ENCODE measurements at regions of chr15 and their contacts with region 1.

Region 1: GRCh38 chr15:33737687-33738601 is 230.4 kb upstream of the CHRM5 start:
- DNase-seq: peak; percentile 55
- H3K4me3 ChIP-seq: no peak overlapping the region
- H3K27ac ChIP-seq: no peak overlapping the region
- H3K4me1 ChIP-seq: no peaks in the 10 kb centered on the region
- H3K27me3 ChIP-seq: no peaks in the 10 kb centered on the region
- CTCF ChIP-seq: peak; percentile 81

Region 2: GRCh38 chr15:33067941-33068481 is 669.9 kb before region 1 on chr15:
- CTCF ChIA-PET with region 1: no interaction called
- POLR2A ChIA-PET with region 1: no interaction called
- intact Hi-C with region 1: loop called (anchors 10 kb)
- DNase-seq: no peak
- H3K4me3 ChIP-seq: peak overlapping the region; percentile 5
- H3K27ac ChIP-seq: no peak overlapping the region
- H3K4me1 ChIP-seq: peaks cover 20% of the 10 kb centered on the region
- H3K27me3 ChIP-seq: peaks cover 69% of the 10 kb centered on the region
- CTCF ChIP-seq: no peak

Region 3: DNA sequence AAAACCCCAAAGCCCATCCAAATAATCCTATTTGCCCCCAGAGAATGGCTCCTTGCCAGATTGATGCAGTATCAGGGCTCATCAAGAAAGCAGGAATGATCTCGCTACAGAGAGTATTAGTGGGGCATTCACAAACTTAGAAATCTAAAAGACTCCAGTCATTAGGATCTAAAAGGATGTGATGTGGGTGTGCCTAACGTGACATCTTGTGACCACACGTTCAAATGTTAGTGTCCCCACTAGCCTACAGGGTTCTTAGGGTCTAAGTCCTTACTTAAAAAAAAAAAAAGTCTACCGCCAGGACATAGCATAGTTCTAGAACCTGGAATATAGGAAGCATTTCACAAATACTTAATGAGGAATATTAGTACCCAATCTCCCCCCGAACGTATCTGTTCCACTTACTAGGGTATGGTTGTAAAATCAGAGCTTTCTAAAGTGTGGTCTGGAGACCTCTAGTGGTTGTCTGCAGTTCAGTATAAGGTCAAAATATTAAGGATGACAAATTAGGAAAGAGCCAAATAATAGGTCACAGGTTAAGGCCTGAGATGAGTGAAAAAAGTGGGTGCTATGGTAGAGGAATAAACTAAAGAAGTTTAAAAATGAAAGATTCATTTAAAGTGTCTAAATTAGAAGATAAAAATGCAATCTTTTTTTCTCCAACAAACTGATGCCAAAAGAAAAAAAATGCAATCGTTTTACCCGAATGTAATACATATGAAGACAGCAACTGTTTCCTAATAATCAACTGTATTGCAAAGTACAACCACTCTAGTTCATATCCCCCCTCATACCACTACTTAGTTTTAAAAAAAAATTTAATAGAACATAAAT is 226.1 kb after region 1 on chr15:
- CTCF ChIA-PET with region 1: no interaction called
- POLR2A ChIA-PET with region 1: no interaction called
- intact Hi-C with region 1: loop called (anchors 2 kb)
- DNase-seq: peak; percentile 38
- H3K4me3 ChIP-seq: no peak overlapping the region
- H3K27ac ChIP-seq: no peak overlapping the region
- H3K4me1 ChIP-seq: no peaks in the 10 kb centered on the region
- H3K27me3 ChIP-seq: no peaks in the 10 kb centered on the region
- CTCF ChIP-seq: peak; percentile 66

Region 4: GRCh38 chr15:33994005-33994615 is 256.2 kb after region 1 on chr15:
- CTCF ChIA-PET with region 1: no interaction called
- POLR2A ChIA-PET with region 1: no interaction called
- intact Hi-C with region 1: loop called (anchors 1 kb)
- DNase-seq: peak; percentile 57
- H3K4me3 ChIP-seq: no peak overlapping the region
- H3K27ac ChIP-seq: no peak overlapping the region
- H3K4me1 ChIP-seq: no peaks in the 10 kb centered on the region
- H3K27me3 ChIP-seq: no peaks in the 10 kb centered on the region
- CTCF ChIP-seq: peak; percentile 62